ENCODE measurements at regions of chr3 and their contacts with region 1.

Region 1: GRCh38 chr3:122793568-122794416 is at the start of gene HSPBAP1:
- H3K4me3 Mint-ChIP-seq: peak within 1 kb of the TSS; percentile 93
- H3K27ac Mint-ChIP-seq: peak within 1 kb of the TSS; percentile 92
- H3K4me1 Mint-ChIP-seq: peaks cover 16% of the 10 kb centered on the region
- H3K27me3 Mint-ChIP-seq: no peaks in the 10 kb centered on the region

Region 2: GRCh38 chr3:122564155-122564912 is 229.5 kb before region 1 on chr3 and contains the starts of genes DTX3L and PARP9:
- intact Hi-C with region 1: no loop called
- H3K4me3 Mint-ChIP-seq: peak within 1 kb of the TSS; percentile 87
- H3K27ac Mint-ChIP-seq: peak within 1 kb of the TSS; percentile 97
- H3K4me1 Mint-ChIP-seq: peaks cover 86% of the 10 kb centered on the region
- H3K27me3 Mint-ChIP-seq: no peaks in the 10 kb centered on the region

Region 3: DNA sequence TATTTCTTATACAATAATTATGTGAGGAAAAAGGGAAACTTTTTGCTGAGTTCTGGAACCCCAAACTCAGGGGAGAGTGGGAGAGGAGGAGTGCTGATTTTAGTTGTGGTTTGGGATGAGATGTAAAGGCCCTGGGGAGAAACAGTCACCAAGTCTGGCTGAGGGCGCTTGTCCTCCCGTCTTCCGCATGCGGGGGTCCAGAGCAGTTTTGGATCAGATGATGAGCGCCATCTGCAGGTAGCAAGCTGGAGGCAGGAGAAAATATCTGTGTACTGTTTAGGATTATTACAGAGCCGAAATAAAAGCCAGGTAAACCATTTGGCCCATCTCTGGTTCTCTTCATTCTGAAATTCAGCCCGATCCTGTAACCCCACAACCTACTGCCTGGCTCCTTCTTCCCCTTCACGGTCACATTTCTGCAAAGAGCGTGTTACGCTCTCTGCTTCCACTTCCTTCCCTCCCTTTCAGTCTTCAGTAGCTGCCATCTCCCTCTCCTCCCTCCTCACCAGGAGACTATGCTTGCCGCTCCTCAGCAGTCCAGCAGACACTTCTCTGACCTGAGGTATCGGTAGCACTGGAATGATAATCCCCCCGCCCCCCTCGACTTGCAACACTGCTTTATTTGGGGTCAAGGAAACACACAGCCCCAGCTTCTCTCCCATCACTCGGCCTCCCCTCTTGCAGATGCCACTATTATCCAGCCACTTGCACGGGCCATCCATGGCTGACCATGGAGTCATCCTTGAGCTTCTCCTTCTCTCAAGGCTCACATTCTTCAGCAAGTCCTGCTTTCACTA is 114.5 kb before region 1 on chr3:
- intact Hi-C with region 1: loop called (anchors 10 kb)
- H3K4me3 Mint-ChIP-seq: peak overlapping the region; percentile 94
- H3K27ac Mint-ChIP-seq: peak overlapping the region; percentile 94
- H3K4me1 Mint-ChIP-seq: peaks cover 57% of the 10 kb centered on the region
- H3K27me3 Mint-ChIP-seq: no peaks in the 10 kb centered on the region

Region 4: GRCh38 chr3:122774564-122774963 is 19.2 kb before region 1 on chr3:
- intact Hi-C with region 1: loop called (anchors 2 kb)
- H3K4me3 Mint-ChIP-seq: peak overlapping the region; percentile 31
- H3K27ac Mint-ChIP-seq: peak overlapping the region; percentile 91
- H3K4me1 Mint-ChIP-seq: peaks cover 36% of the 10 kb centered on the region
- H3K27me3 Mint-ChIP-seq: no peaks in the 10 kb centered on the region

Region 5: DNA sequence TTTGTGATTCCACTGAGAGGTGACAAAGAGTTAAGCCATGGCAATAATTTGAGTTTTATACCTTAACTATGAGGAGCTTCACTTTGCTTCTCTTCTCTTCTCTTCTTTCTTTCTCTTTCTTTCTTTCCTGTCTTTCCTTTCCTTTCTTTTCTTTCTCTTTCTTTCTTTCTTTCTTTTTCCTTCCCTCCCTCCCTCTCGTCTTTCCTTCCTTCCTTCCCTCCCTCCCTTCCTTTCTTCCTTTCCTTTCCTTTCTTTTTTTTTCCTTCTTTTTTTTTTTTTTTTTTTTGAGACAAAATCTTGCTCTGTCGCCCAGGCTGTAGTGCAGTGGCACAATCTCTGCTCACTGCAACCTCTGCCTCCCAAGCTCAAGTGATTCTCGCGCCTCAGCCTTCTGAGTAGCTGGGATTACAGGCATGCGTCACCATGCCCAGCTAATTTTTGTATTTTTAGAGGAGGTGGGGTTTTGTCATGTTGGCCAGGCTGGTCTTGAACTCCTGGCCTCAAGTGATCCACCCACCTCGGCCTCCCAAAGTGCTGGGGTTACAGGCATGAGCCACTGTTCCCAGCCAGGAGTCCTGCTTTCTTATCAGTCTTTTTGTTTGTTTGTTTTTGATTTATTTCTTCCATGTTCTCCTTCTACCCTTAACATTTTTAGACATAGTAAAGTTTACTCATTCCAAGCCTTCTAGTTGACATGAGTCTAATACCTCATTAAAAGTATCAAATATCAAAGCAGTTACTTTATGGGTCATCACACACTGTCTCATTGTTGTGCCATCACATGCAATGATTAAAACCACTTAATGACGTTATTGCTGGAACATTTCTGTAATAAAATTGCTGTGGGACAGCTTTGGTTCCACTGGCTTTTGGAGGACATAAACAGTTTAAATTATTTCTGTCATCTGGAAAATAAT is 30.9 kb after region 1 on chr3:
- intact Hi-C with region 1: loop called (anchors 5 kb)
- H3K4me3 Mint-ChIP-seq: peak overlapping the region; percentile 11
- H3K27ac Mint-ChIP-seq: peak overlapping the region; percentile 88
- H3K4me1 Mint-ChIP-seq: peaks cover 61% of the 10 kb centered on the region
- H3K27me3 Mint-ChIP-seq: no peaks in the 10 kb centered on the region

Region 6: DNA sequence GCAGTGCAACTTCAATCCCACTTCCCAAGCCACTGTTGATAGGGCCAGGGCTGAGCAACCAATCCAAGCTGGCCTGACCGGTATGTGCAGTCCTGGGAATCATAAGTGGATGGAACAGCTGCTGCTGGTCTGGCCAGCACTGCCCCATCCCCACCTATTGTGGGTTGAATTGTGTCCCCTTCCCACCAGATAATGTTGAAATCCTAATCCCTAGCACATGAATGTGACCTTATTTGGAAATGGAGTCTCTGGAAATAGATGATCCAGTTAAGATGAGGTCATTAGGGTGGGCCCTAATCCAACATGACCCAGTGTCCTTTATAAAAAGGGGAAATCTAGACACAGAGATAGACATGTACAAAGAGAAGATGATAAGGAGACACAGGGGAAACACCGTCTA is 259.3 kb after region 1 on chr3:
- intact Hi-C with region 1: no loop called
- H3K4me3 Mint-ChIP-seq: no peak overlapping the region
- H3K27ac Mint-ChIP-seq: no peak overlapping the region
- H3K4me1 Mint-ChIP-seq: no peaks in the 10 kb centered on the region
- H3K27me3 Mint-ChIP-seq: peaks cover 8% of the 10 kb centered on the region

Measured in dendritic cell treated with granulocyte-macrophage colony-stimulating factor and Interleukin-4, amounts not matched to agents 40 ng/mL and 50 ng/mL, for 4 days (primary cell).